ENCODE measurements at regions of chr14 and their contacts with region 1.

Region 1: DNA sequence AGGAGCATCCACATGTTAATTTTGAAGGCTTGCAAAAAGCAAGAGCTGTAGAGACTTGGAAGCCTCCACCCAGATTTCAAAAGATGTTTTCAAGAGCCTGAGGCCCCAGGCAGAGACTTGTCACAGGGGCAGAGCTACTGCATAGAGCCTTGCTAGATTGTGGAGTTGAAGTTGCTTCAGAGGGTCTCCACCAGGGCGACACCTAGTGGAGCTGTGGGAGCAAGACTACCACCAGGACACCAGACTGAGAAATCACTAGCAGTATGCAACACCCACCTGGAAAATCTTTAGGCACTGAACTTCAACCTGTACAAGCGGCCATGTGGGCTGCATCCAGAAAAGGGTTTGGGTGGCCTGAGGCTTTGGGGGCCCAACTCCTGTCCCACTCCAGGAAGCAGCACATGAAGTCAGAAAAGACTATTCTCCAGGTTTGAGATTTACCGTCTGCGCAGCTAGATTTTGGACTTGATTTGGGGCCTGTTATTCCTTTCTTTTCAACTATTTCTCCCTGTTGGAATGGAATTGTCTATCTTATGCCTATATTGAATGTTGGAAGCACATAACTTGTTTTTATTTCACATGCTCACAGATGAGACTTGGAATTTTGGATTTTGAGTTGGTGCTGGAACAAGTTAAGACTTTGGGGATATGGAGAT is 508.6 kb downstream of the FLRT2 start:
- DNase-seq: peak; percentile 21 to 58
- ATAC-seq: peak; percentile 66 to 87 (median 86)
- H3K4me3 ChIP-seq: no peak overlapping the region
- H3K4me3 Mint-ChIP-seq: no peak overlapping the region
- H3K27ac ChIP-seq: no peak overlapping the region
- H3K27ac Mint-ChIP-seq: no peak overlapping the region
- H3K4me1 ChIP-seq: no peaks in the 10 kb centered on the region
- H3K4me1 Mint-ChIP-seq: no peaks in the 10 kb centered on the region
- H3K27me3 ChIP-seq: no peaks in the 10 kb centered on the region
- H3K27me3 Mint-ChIP-seq: no peaks in the 10 kb centered on the region
- CTCF ChIP-seq: peak; percentile 72

Region 2: GRCh38 chr14:85867450-85867849 is 171.1 kb before region 1 on chr14:
- intact Hi-C with region 1: loop called (anchors 10 kb)
- DNase-seq: peak in 1 of 2 donors; percentile 2
- ATAC-seq: no peak
- H3K4me3 ChIP-seq: no peak overlapping the region
- H3K4me3 Mint-ChIP-seq: no peak overlapping the region
- H3K27ac ChIP-seq: no peak overlapping the region
- H3K27ac Mint-ChIP-seq: no peak overlapping the region
- H3K4me1 ChIP-seq: no peaks in the 10 kb centered on the region
- H3K4me1 Mint-ChIP-seq: no peaks in the 10 kb centered on the region
- H3K27me3 ChIP-seq: no peaks in the 10 kb centered on the region
- H3K27me3 Mint-ChIP-seq: peaks cover 0 to 12% of the 10 kb centered on the region in 2 donors
- CTCF ChIP-seq: no peak

Region 3: GRCh38 chr14:85883966-85884365 is 154.5 kb before region 1 on chr14:
- intact Hi-C with region 1: no loop called
- DNase-seq: no peak
- ATAC-seq: no peak
- H3K4me3 ChIP-seq: no peak overlapping the region
- H3K4me3 Mint-ChIP-seq: no peak overlapping the region
- H3K27ac ChIP-seq: no peak overlapping the region
- H3K27ac Mint-ChIP-seq: no peak overlapping the region
- H3K4me1 ChIP-seq: no peaks in the 10 kb centered on the region
- H3K4me1 Mint-ChIP-seq: no peaks in the 10 kb centered on the region
- H3K27me3 ChIP-seq: no peaks in the 10 kb centered on the region
- H3K27me3 Mint-ChIP-seq: no peaks in the 10 kb centered on the region
- CTCF ChIP-seq: no peak

Measured in natural killer cell (primary cell).